ENCODE measurements at regions of chr2 and their contacts with region 1.

Region 1: GRCh38 chr2:15186118-15186517 is 375.0 kb downstream of the NBAS start:
- DNase-seq: no peak
- H3K4me3 ChIP-seq: no peak overlapping the region
- H3K27ac ChIP-seq: no peak overlapping the region
- H3K4me1 ChIP-seq: no peaks in the 10 kb centered on the region
- H3K27me3 ChIP-seq: no peaks in the 10 kb centered on the region
- CTCF ChIP-seq: no peak

Region 2: DNA sequence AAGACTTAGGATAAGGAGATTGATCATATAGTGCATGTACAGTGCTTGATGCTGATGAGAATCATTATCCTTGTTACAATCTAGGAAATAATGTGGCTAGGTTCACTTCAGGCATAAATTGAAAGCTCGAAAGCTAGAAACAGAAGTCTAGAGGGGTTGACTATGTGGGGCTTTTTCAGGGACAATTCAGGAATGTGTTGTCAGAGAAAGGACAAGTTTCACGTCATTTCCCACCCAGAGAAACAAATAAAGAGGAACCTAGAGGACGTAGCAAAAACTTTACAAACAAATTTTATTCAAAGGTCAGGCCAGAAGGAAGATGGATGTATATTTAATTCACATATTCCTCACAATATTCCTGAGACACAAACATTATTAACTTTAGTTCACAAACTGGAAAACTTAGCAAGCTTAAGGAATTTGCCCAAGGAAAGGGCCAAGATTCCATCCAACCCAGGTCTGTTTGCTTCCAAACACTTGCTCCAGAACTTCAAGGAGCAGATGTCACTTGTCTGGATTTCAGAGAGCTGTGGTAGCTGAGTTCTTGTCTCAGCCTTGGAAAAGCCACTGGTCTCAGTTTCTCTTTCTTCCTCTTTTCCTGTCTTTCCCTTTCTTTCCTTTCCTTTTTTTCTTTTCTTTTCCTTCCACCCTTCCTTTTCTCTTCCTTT is 1472.1 kb after region 1 on chr2:
- CTCF ChIA-PET with region 1: no interaction called
- POLR2A ChIA-PET with region 1: interaction called, 10 read pairs
- intact Hi-C with region 1: no loop called
- DNase-seq: peak in 1 of 2 experiments; percentile 19
- H3K4me3 ChIP-seq: no peak overlapping the region
- H3K27ac ChIP-seq: no peak overlapping the region
- H3K4me1 ChIP-seq: no peaks in the 10 kb centered on the region
- H3K27me3 ChIP-seq: no peaks in the 10 kb centered on the region
- CTCF ChIP-seq: no peak